ENCODE measurements at regions of chr1 and their contacts with region 1.

Region 1: DNA sequence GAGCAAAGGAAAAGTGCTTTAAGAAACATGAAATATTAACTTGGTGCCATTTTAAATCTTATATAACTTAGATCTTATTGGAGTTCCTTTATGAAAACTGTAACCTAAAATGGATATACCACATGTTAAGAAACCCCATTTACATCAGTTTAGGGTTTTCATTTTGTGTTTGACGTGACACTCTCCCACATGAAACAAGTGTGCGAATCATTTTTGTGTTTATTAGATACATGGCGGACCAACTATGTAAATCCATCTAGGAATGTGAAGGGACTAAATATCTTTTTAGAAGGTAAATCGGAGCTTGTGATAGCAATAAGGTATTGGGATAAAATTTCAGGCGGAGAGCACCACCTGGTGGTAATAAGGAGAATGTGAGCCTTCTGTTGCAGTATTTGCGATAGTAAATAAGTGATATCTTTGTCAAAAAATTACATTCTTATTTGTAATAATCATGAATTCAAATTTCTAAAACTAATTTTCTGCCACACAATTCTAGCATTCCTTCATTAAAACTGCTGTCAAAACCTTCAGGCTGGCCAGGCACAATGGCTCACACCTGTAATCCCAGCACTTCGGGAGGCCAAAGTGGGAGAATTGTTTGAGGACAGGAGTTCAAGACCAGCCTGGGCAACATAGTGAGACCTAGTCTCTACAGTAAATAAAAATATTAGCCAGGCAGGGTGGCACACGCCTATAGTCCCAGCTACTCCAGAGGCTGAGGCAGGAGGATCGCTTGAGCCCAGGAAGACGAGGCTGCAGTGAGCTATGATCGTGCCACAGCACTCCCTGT is 31.3 kb downstream of the SMAP2 start:
- DNase-seq: no peak
- H3K4me3 ChIP-seq: no peak overlapping the region
- CTCF ChIP-seq: peak; percentile 36

Region 2: GRCh38 chr1:40078512-40079333 is 326.1 kb before region 1 on chr1:
- CTCF ChIA-PET with region 1: interaction called, 16 read pairs
- POLR2A ChIA-PET with region 1: no interaction called
- DNase-seq: no peak
- H3K4me3 ChIP-seq: no peak overlapping the region
- CTCF ChIP-seq: peak; percentile 79

Region 3: GRCh38 chr1:40344597-40344996 is 60.3 kb before region 1 on chr1:
- CTCF ChIA-PET with region 1: interaction called, 31 read pairs
- POLR2A ChIA-PET with region 1: no interaction called
- DNase-seq: no peak
- H3K4me3 ChIP-seq: no peak overlapping the region
- CTCF ChIP-seq: no peak

Region 4: DNA sequence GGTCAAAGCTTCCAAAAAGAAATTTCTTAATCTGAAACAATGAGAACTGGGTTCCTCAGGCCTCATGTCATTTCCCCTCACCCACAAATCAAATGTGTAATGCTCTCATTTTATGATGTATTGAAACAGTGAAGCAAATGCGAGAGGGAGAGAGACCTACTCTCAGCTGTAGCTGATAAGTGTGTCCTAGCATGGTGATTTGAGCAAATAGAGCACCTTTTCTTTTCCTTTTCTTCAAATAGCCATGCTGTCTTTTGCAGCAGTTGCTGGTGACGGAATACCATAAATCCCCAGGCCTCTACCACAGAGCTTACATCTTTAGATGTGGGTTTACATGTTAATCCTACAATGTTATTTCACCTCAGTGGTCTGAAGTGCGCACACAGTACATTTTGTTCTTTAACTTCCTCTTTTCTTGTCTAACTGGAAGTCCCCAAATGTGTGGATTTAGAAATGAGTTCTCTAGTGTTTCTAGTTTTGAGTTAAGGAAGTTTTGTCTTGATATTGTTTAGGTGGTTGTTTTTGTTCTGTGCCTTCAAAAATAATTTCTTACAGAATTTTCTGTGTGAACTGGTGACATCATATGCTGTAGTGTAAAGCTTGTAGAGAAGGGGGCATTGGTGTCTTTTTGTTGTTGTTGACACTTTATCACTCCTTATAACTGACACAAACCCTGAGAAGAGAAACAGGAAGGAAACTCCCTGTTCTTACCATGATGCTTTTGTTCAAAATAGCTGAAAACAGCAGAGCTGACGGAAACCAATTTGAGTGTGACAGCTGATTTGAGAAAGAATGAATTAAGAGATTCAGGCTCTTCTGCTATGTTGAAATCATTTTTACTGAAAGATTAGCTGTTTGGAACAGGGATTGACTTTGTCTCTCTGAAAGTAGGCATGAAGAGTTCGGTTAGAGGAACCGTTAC is 19.2 kb before region 1 on chr1:
- CTCF ChIA-PET with region 1: interaction called, 58 read pairs
- POLR2A ChIA-PET with region 1: no interaction called
- DNase-seq: no peak
- H3K4me3 ChIP-seq: no peak overlapping the region
- CTCF ChIP-seq: no peak

Region 5: GRCh38 chr1:40438391-40439015 is 33.6 kb after region 1 on chr1:
- CTCF ChIA-PET with region 1: interaction called, 11 read pairs
- POLR2A ChIA-PET with region 1: no interaction called
- DNase-seq: no peak
- H3K4me3 ChIP-seq: no peak overlapping the region
- CTCF ChIP-seq: peak; percentile 45

Region 6: GRCh38 chr1:40553017-40553416 is 148.2 kb after region 1 on chr1:
- CTCF ChIA-PET with region 1: no interaction called
- POLR2A ChIA-PET with region 1: no interaction called
- DNase-seq: no peak
- H3K4me3 ChIP-seq: no peak overlapping the region
- CTCF ChIP-seq: no peak

Measured in AG04449 (cell line).